Activated T-helper 1 cell treated with anti-CD3 and anti-CD28 coated beads, Interleukin-12 subunit alpha, Interleukin-12 subunit beta, Interleukin-2, Interleukin-4 antibody, amounts not matched to agents 30 ng/mL and 10 ng/mL and 1 ng/mL, durations not matched to agents 14 hours and 24 hours and 36 hours (primary cell): ENCODE measurements at regions of chr9 and their contacts with region 1.

Region 1: DNA sequence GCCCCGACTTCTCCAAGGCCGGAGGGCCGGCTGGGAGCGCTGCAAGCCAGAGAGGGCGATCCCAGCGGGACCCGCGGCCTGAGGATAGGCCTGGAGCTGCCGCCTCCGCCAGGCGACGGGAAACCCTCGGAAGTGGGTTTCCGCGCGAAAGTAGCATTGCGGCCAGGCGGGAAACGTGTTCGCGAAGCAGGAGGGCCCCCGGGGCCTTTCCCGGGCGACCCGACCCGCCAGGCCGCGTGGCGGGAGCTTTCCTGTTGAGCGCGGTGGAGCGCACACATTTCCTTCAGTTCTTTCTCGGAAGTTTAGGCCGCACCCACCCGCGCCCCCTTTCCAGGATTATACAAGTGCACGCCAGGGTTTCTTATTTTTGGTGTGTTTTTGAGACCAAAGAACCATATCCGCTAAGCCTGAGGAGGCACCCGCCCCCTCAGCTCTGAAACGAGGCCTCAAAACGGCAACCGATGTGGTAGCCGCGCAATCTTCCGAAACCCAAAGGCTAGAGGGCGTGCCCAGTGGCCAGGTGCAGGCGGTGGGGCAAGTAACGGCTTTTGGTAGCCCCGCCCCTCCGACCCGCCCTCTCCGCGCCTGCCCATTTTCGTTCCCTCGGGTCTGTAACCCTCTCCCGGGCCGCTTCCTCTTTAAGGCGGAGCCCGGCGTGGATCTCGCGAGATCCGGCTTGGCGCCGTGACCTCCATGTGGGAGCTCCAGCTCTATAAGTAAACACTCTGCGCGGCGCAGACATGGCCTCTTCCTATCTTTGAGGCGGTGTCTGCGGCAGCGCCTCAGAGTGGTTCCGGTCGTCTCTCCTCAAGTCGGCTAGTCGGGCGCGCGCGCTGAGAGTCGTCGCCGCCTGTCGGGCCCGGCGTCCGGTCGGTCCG is at the start of gene UHRF2:
- DNase-seq: peak; percentile 97
- H3K4me3 Mint-ChIP-seq: peak within 1 kb of the TSS; percentile 89
- H3K27ac Mint-ChIP-seq: peak within 1 kb of the TSS; percentile 92
- H3K4me1 Mint-ChIP-seq: peaks cover 27% of the 10 kb centered on the region
- H3K27me3 Mint-ChIP-seq: no peaks in the 10 kb centered on the region
- total RNA-seq, gene UHRF2: 73.0 and 77.3 TPM in 2 replicates

Region 2: DNA sequence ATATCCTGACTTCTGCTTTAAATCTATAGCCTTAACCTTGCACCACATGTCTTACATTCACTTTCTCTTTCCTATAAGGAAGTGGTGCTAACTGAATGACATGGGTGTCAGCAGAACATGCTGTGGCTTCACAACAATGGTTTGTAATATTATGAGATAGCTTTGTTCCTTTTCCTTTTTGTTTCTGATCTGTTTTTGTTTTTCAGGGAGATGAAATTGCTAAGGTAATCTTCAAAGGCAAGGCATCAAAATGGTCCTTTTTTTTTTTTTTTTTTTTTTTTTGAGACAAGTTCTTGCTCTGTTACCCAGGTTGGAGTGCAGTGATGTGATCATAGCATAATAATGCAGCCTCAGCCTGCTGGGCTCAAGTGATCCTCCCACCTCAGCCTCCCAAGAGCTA is 343.7 kb before region 1 on chr9:
- intact Hi-C with region 1: loop called (anchors 2 kb)
- DNase-seq: peak; percentile 24
- H3K4me3 Mint-ChIP-seq: peak overlapping the region; percentile 61
- H3K27ac Mint-ChIP-seq: peak overlapping the region; percentile 88
- H3K4me1 Mint-ChIP-seq: peaks cover 20% of the 10 kb centered on the region
- H3K27me3 Mint-ChIP-seq: peaks cover 2% of the 10 kb centered on the region

Region 3: DNA sequence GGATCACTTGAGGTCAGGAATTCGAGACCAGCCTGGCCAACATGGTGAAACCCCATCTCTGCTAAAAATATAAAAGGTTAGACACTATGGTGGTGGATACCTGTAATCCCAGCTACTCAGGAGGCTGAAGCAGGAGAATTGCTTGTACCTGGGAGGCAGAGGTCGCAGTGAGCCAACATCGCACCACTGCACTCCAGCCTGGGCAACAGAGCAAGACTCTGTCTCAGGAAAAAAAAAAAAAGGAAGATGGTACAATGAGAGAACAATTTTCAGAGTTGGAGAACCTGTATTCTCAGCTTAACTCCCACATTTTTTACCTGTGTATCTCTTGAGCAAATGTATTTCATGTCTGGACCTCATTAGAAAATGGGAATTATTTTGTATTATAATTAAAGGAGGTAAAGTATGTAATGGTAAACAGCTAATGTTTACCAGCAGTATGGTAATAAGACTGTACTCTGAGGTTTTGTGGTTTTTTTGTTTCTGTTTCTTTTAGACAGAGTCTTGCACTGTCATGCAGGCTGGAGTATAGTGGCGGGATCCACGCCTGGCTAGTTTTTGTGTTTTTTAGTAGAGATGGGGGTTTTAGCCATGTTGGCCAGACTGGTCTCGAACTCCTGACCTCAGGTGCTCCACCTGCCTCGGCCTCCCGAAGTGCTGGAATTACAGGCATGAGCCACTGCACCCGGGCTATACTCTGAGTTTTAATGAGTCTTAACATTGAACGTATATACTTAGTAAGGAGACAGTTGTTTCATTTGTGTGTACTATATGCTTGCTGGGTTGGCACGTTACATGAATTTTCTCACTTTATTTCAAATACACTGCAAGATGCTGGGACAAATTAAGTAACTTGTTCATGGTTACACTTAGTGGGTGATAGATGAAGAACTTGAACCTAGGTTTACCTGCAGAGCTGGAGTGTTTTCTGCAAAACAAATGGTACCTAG is 16.5 kb after region 1 on chr9:
- intact Hi-C with region 1: loop called (anchors 1 kb)
- DNase-seq: peak; percentile 40
- H3K4me3 Mint-ChIP-seq: peak overlapping the region; percentile 46
- H3K27ac Mint-ChIP-seq: peak overlapping the region; percentile 76
- H3K4me1 Mint-ChIP-seq: peaks cover 86% of the 10 kb centered on the region
- H3K27me3 Mint-ChIP-seq: no peaks in the 10 kb centered on the region

Region 4: DNA sequence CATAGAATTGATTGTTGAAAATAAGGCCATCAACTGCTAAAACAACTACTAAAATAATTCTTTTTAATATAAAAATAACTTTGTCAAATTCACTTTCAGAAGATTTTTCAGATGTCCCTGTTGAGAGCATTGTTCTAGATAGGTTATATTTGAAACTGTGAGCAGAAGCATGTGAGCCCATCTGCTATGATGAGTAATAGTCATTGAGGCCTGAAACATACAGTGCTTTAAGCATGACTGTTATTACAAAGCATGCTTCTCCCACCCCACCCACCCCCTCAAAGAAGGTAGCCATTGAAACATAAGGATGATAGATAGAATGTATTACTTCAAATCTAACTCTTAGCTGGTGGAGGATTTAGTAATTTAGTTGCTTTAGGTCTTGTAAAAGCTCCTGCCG is 86.3 kb after region 1 on chr9:
- intact Hi-C with region 1: loop called (anchors 5 kb)
- DNase-seq: no peak
- H3K4me3 Mint-ChIP-seq: no peak overlapping the region
- H3K27ac Mint-ChIP-seq: peak overlapping the region; percentile 40
- H3K4me1 Mint-ChIP-seq: peaks cover 10% of the 10 kb centered on the region
- H3K27me3 Mint-ChIP-seq: peaks cover 1% of the 10 kb centered on the region

Region 5: GRCh38 chr9:6681147-6681956 is 268.6 kb after region 1 on chr9:
- intact Hi-C with region 1: loop called (anchors 1 kb)
- DNase-seq: peak; percentile 88
- H3K4me3 Mint-ChIP-seq: peak overlapping the region; percentile 94
- H3K27ac Mint-ChIP-seq: peak overlapping the region; percentile 99
- H3K4me1 Mint-ChIP-seq: peaks cover 24% of the 10 kb centered on the region
- H3K27me3 Mint-ChIP-seq: peaks cover 3% of the 10 kb centered on the region

Region 6: DNA sequence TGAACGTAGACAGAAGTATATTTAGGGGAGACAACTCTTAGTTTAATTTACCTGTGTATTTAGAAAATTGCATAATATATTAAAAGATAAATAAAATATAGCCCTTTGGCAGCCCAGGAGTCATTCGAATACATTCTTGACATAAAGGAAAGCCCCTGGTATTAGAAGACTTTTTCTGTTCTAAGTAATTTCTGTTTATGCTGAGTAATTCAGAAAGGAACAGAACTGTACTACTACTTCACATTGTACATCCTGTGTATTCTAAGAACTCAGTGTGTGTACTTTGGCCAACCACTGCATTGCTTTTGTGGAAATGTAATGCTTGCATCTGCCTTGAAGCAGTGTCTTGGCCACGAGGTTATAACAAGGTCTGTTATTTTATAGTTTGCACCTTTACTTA is 481.4 kb after region 1 on chr9:
- intact Hi-C with region 1: loop called (anchors 10 kb)
- DNase-seq: no peak
- H3K4me3 Mint-ChIP-seq: peak overlapping the region; percentile 32
- H3K27ac Mint-ChIP-seq: peak overlapping the region; percentile 61
- H3K4me1 Mint-ChIP-seq: peaks cover 33% of the 10 kb centered on the region
- H3K27me3 Mint-ChIP-seq: no peaks in the 10 kb centered on the region